Heart left ventricle (tissue), 16 donors: ENCODE measurements at regions of chr18 and their contacts with region 1.

Region 1: DNA sequence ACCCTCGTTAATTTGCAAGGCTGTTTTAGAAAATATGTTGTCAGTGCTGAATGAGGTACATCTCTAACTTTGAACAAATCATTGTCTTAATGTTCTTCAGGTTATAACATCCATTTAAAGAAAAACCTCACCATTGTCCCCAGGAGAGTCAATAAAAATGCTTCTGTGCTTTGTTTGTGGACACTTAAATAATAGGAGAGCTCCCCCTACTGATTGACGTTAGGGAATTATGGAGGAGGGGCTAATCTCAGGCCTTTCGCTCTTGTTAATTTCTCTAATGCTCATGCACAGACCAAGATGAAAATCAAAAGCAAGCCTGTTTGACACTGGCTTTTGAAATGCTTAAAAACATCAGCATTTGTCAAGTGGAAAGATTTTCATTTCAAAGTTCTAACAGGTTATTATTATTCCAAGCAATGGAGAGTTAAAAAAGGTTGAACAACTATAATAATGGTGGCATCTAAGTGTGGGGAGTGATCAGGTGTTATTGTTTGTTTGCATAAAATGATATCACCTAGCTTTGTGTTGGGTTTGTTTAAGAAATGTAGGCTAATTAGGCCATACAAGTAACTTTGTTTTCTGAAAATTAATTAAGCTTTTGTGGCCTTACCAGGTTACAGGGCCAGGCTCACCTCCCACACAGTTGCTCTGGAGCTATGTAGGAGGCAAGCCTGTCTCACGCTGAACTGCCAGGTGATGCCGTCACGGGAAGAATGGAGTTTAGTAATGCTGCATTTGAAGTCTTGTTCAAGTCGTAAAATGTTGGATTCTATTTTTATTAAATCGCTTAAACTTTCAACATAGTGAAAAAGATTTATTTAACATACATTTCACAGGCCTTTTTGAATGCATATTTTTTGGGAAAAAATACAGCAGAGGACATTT is 51.7 kb upstream of the SMIM21 start:
- DNase-seq: no peak
- ATAC-seq: peak in 3 of 4 donors; percentile 79 to 86 (median 84)
- H3K4me3 ChIP-seq: no peak overlapping the region
- H3K27ac ChIP-seq: no peak overlapping the region
- H3K4me1 ChIP-seq: no peaks in the 10 kb centered on the region
- H3K27me3 ChIP-seq: no peaks in the 10 kb centered on the region
- CTCF ChIP-seq: peak; percentile 60 to 84 (median 70)
- POLR2A ChIP-seq: no peak

Region 2: GRCh38 chr18:74645679-74646078 is 833.6 kb before region 1 on chr18:
- intact Hi-C with region 1: loop called in 2 of 10 experiments (anchors 5 kb)
- DNase-seq: no peak
- ATAC-seq: no peak
- H3K4me3 ChIP-seq: no peak overlapping the region
- H3K27ac ChIP-seq: no peak overlapping the region
- H3K4me1 ChIP-seq: no peaks in the 10 kb centered on the region
- H3K27me3 ChIP-seq: no peaks in the 10 kb centered on the region
- CTCF ChIP-seq: no peak
- POLR2A ChIP-seq: no peak

Region 3: GRCh38 chr18:74896390-74896991 is 582.7 kb before region 1 on chr18:
- intact Hi-C with region 1: loop called in 5 of 10 experiments (anchors 1 to 10 kb)
- DNase-seq: peak in 4 of 5 donors; percentile 20 to 37 (median 26)
- ATAC-seq: peak; percentile 78 to 82 (median 80)
- H3K4me3 ChIP-seq: no peak overlapping the region
- H3K27ac ChIP-seq: no peak overlapping the region
- H3K4me1 ChIP-seq: peaks cover 0 to 20% (median 0%) of the 10 kb centered on the region in 12 donors
- H3K27me3 ChIP-seq: no peaks in the 10 kb centered on the region
- CTCF ChIP-seq: peak; percentile 31 to 56 (median 48)
- POLR2A ChIP-seq: no peak

Region 4: DNA sequence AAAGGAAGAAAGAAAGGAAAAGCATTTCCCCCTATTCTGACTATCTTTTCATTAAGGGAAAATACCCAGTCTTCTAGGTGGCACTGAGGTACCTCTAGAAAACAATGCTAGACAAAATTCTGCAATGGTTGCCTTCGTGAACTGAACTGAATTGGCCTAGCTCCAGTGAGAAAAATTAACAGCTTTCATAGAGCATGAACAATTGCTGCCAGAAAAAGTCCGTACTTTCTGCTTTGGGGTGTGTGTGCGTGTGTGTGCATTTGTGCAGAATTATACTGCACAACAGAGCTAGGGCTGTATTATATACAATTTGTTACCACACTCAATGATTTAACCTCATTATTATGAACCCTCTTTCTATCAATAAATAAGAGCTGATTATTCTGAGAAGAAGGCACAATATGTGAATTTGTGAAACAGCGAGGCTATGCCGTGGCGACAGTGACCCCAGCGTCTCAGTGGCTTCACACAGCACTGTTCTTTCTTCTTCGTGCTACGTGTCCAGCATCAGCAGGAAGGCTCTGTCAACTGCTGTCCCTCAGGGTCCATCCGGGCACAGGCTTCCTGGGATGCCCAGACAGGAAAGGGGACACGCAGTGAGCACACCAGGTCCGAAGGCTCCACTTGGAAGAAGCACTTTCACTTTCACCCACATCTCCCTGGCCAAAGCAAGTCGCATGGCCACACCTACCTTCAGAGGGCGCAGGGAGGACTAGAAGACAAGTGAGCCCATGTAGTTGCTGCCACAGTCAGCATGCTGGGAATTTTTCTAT is 317.8 kb before region 1 on chr18:
- intact Hi-C with region 1: loop called in 1 of 10 experiments (anchors 10 kb)
- DNase-seq: peak in 3 of 5 donors; percentile 34 to 37 (median 36)
- ATAC-seq: peak; percentile 29 to 71 (median 54)
- H3K4me3 ChIP-seq: peak overlapping the region in 11 of 12 donors; percentile 2 to 65 (median 47)
- H3K27ac ChIP-seq: peak overlapping the region in 5 of 12 donors; percentile 7 to 39 (median 27)
- H3K4me1 ChIP-seq: peaks cover 0 to 8% (median 0%) of the 10 kb centered on the region in 12 donors
- H3K27me3 ChIP-seq: no peaks in the 10 kb centered on the region
- CTCF ChIP-seq: peak in 3 of 12 donors; percentile 10 to 26 (median 20)
- POLR2A ChIP-seq: no peak

Region 5: GRCh38 chr18:75173125-75173432 is 306.2 kb before region 1 on chr18:
- intact Hi-C with region 1: loop called in 3 of 10 experiments (anchors 5 to 10 kb)
- DNase-seq: no peak
- ATAC-seq: no peak
- H3K4me3 ChIP-seq: no peak overlapping the region
- H3K27ac ChIP-seq: no peak overlapping the region
- H3K4me1 ChIP-seq: peaks cover 0 to 21% (median 7%) of the 10 kb centered on the region in 12 donors
- H3K27me3 ChIP-seq: no peaks in the 10 kb centered on the region
- CTCF ChIP-seq: peak in 6 of 12 donors; percentile 10 to 30 (median 22)
- POLR2A ChIP-seq: no peak

Region 6: GRCh38 chr18:75418293-75419005 is 60.8 kb before region 1 on chr18:
- intact Hi-C with region 1: loop called in 1 of 10 experiments (anchors 10 kb)
- DNase-seq: no peak
- ATAC-seq: no peak
- H3K4me3 ChIP-seq: no peak overlapping the region
- H3K27ac ChIP-seq: no peak overlapping the region
- H3K4me1 ChIP-seq: no peaks in the 10 kb centered on the region
- H3K27me3 ChIP-seq: no peaks in the 10 kb centered on the region
- CTCF ChIP-seq: no peak
- POLR2A ChIP-seq: no peak

Region 7: GRCh38 chr18:75462178-75462832 is 16.9 kb before region 1 on chr18:
- intact Hi-C with region 1: loop called in 1 of 10 experiments (anchors 1 kb)
- DNase-seq: peak in 1 of 5 donors; percentile 50
- ATAC-seq: peak; percentile 79 to 93 (median 90)
- H3K4me3 ChIP-seq: no peak overlapping the region
- H3K27ac ChIP-seq: peak overlapping the region in 1 of 12 donors; percentile 24
- H3K4me1 ChIP-seq: peaks cover 0 to 13% (median 0%) of the 10 kb centered on the region in 12 donors
- H3K27me3 ChIP-seq: no peaks in the 10 kb centered on the region
- CTCF ChIP-seq: no peak
- POLR2A ChIP-seq: no peak